ENCODE measurements at regions of chr2 and their contacts with region 1.

Region 1: DNA sequence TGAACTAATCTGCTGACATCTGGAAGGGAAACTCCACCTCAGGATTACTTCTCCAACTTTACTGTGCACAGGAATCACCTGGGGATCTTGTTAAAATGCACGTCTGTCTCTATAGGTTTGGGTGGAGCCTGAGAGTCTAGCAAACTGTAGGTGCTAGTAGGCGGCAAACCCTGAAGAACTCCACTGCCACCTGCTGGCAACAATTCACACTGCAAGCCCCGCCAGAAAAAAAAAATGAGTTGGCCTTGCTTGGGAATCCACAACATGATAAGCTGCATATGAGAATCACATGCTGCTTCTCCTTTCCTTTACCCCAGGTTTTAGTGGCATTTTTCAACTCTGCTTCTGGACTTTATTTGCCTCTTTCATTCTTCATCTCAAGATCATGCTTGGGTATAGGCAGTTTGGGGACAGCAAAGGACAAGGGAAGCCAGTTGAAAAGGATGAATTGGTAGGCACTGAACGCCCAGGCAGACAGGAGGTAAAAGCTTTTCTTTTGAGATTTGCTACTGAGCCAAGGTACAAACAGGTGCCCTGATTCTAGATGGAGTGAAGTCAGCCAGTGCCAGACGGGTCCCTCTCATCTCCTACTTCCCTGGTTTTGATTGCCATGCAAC is 88.8 kb downstream of the VIT start:
- DNase-seq: peak; percentile 50
- ATAC-seq: peak; percentile 79
- H3K4me3 Mint-ChIP-seq: no peak overlapping the region
- H3K27ac Mint-ChIP-seq: no peak overlapping the region
- H3K4me1 Mint-ChIP-seq: peaks cover 10% of the 10 kb centered on the region
- H3K27me3 Mint-ChIP-seq: peaks cover 5% of the 10 kb centered on the region
- CTCF ChIP-seq: peak; percentile 95

Region 2: GRCh38 chr2:35168354-35168753 is 1616.9 kb before region 1 on chr2:
- CTCF ChIA-PET with region 1: no interaction called
- POLR2A ChIA-PET with region 1: no interaction called
- intact Hi-C with region 1: loop called (anchors 5 kb)
- DNase-seq: no peak
- ATAC-seq: no peak
- H3K4me3 Mint-ChIP-seq: no peak overlapping the region
- H3K27ac Mint-ChIP-seq: no peak overlapping the region
- H3K4me1 Mint-ChIP-seq: no peaks in the 10 kb centered on the region
- H3K27me3 Mint-ChIP-seq: no peaks in the 10 kb centered on the region
- CTCF ChIP-seq: no peak

Region 3: GRCh38 chr2:36355151-36355889 is 430.0 kb before region 1 on chr2 and contains the start of gene CRIM1:
- CTCF ChIA-PET with region 1: interaction called, 4 read pairs
- POLR2A ChIA-PET with region 1: no interaction called
- intact Hi-C with region 1: loop called (anchors 1 kb)
- DNase-seq: peak; percentile 33
- ATAC-seq: peak; percentile 56
- H3K4me3 Mint-ChIP-seq: peak within 1 kb of the TSS; percentile 70
- H3K27ac Mint-ChIP-seq: no peak within 1 kb of the TSS
- H3K4me1 Mint-ChIP-seq: peaks cover 36% of the 10 kb centered on the region
- H3K27me3 Mint-ChIP-seq: peaks cover 32% of the 10 kb centered on the region
- CTCF ChIP-seq: no peak
- total RNA-seq, gene CRIM1: 0.58 and 0.71 TPM in 2 replicates

Region 4: GRCh38 chr2:36775261-36775660 is 10.0 kb before region 1 on chr2:
- CTCF ChIA-PET with region 1: interaction called, 10 read pairs
- POLR2A ChIA-PET with region 1: interaction called, 3 read pairs
- intact Hi-C with region 1: no loop called
- DNase-seq: no peak
- ATAC-seq: no peak
- H3K4me3 Mint-ChIP-seq: no peak overlapping the region
- H3K27ac Mint-ChIP-seq: no peak overlapping the region
- H3K4me1 Mint-ChIP-seq: no peaks in the 10 kb centered on the region
- H3K27me3 Mint-ChIP-seq: peaks cover 3% of the 10 kb centered on the region
- CTCF ChIP-seq: no peak

Region 5: GRCh38 chr2:37005118-37005868 is 220.0 kb after region 1 on chr2:
- CTCF ChIA-PET with region 1: no interaction called
- POLR2A ChIA-PET with region 1: no interaction called
- intact Hi-C with region 1: loop called (anchors 1 kb)
- DNase-seq: no peak
- ATAC-seq: peak; percentile 80
- H3K4me3 Mint-ChIP-seq: peak overlapping the region; percentile 61
- H3K27ac Mint-ChIP-seq: peak overlapping the region; percentile 72
- H3K4me1 Mint-ChIP-seq: peaks cover 23% of the 10 kb centered on the region
- H3K27me3 Mint-ChIP-seq: no peaks in the 10 kb centered on the region
- CTCF ChIP-seq: no peak

Region 6: DNA sequence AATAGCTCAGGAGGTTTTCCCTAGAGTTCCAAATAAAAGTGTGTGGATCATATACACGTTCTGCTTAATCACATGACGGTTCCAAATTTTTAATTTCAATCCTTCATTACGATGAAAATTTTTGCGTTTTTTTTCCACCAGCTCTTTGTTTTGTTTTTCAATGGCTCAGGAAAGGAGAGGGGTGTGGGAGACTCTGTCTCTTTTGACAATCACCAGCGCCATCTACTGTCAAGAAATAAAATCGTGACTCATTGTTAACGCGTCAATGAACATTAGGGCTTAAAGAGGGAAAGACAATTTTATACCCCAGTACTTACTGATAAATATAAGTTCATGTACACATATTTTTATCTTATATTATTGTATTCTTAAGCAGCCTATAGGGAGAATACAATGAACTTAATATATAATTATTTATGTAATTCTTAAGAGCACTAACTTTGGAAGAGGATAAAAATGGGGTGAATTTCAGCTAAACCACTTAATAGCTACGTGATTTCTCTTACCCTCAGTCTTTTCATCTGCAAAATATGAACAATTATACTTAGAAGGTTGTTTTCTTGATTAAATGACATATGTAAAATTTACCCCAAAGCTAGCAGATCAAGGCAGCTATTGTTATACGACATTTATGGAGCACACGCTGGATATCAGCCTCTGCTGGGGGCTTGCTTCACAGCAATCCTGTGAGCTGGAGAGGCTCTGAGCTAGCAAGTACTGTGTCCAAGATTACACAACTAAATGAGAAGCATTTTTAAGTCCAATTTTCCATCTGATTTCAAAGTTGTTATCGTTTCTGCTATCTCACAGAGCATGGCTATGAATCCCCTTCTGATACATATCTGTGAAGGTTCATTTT is 1092.4 kb after region 1 on chr2:
- CTCF ChIA-PET with region 1: no interaction called
- POLR2A ChIA-PET with region 1: no interaction called
- intact Hi-C with region 1: loop called (anchors 2 kb)
- DNase-seq: no peak
- ATAC-seq: peak; percentile 57
- H3K4me3 Mint-ChIP-seq: no peak overlapping the region
- H3K27ac Mint-ChIP-seq: no peak overlapping the region
- H3K4me1 Mint-ChIP-seq: peaks cover 3% of the 10 kb centered on the region
- H3K27me3 Mint-ChIP-seq: peaks cover 21% of the 10 kb centered on the region
- CTCF ChIP-seq: peak; percentile 76